ENCODE measurements at regions of chr11 and their contacts with region 1.

Region 1: DNA sequence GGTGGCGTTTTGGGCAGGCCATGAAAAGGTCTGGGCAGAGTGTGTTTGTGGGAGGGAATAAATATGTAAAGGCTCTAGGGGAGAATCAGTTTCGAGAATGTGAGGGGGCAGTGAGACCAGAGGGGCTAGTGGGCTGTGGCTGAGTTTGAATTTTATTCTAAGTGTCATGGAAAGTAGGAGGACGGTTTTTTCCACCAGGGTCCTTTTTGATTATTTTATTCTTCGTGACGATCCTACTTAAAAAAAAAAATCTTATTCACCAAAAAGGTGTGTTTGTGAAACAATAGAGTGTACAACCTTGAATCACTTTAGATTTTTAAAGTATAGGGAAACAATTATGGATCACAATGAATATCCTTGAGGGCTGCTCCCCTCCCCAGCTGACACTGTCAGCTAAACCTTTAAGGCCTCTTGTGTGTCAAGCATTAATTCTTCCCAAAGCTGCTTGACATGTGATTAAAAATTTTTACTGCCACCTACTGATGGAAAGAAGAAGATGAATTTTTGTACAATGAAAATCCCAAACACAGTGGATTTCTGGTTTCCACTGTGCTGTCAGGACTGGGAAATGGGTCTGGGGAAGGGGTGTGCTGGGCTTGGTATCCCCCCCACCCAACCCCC is 107.5 kb upstream of the OR4B1 start:
- DNase-seq: peak; percentile 35
- H3K4me3 ChIP-seq: no peak overlapping the region
- H3K27ac ChIP-seq: no peak overlapping the region
- H3K4me1 ChIP-seq: peaks cover 4% of the 10 kb centered on the region
- H3K27me3 ChIP-seq: peaks cover 1% of the 10 kb centered on the region
- CTCF ChIP-seq: peak; percentile 12 to 39

Region 2: DNA sequence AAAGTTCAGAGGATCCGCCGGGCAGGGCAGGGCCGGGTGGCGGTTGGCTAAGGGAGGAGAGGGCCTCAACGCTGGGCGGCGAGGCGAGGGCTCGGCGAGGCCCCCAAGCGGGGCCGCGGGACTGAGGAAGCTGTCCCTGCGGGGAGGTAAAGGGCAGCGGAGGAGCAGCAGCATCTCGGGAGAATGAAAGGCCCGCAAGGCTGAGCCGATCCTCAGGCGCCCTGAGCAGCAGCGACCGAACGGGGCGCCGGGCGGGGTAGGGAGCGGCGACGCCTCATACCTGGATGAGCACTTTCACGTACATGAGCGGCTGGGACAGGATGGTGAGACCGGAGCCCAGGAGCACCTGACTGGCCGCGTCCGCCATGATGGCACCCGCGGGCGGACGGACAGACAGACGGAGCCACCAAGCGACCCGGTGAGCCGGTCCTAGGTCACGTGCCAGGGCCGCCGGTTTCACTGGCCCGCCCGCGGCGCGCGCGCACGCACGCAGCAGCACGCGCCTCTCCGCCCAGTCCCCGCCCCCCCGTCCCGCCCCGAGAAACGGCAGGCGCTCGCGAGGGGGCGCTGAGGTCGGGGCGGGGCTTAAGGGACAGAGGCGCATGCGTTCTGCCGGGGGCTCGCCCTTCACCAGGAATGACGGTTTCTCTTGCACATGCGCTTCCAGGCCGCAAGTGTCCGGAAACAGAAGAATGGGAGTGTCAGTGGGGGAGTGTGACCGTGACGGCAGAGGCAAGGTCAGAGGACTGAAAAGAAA is 466.9 kb before region 1 on chr11 and contains the start of gene MTCH2:
- CTCF ChIA-PET with region 1: no interaction called
- dilution Hi-C with region 1: no loop called
- in situ Hi-C with region 1: no loop called
- intact Hi-C with region 1: no loop called
- DNase-seq: peak; percentile 96
- H3K4me3 ChIP-seq: peak within 1 kb of the TSS; percentile 81 to 99 (median 93)
- H3K27ac ChIP-seq: peak within 1 kb of the TSS; percentile 89
- H3K4me1 ChIP-seq: peaks cover 11% of the 10 kb centered on the region
- H3K27me3 ChIP-seq: no peaks in the 10 kb centered on the region
- CTCF ChIP-seq: peak in 1 of 2 donors; percentile 35
- total RNA-seq, gene MTCH2: 69.3 to 123 TPM

Region 3: DNA sequence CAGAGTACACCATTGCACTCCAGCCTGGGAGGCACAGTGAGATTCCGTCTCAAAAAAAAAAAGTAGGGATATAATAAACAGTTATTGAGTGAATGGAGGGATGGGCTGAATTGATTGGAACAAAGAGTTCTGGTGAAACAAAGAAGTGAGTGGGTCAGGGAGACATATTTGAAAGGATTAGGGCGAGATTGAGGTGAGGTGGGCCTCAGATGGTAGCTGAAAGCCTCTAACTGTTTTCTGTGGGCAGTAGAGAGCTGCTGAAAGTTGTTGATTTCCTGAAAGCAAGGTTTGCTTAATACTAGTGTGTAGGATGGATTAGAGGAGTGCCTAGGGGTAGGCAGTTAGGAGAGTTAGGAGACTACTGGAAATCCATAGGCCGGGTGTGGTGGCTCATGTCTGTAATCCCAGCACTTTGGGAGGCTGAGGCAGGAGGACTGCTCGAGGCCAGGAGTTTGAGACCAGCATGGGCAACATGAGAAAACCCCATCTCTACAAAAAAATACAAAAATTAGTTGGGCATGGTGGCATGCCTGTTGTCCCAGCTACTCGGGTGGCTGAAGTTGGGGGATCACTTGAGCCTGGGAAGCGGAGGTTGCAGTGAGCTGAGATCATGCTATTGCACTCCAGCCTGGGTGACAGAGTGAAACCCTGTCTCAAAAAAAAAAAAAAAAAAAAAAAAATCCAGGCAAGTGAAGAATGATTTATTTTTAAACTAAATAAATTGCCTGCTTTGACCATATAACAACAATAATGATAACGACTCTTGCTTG is 170.2 kb before region 1 on chr11:
- CTCF ChIA-PET with region 1: no interaction called
- dilution Hi-C with region 1: loop called (anchors 10 kb)
- in situ Hi-C with region 1: loop called (anchors 5 kb)
- intact Hi-C with region 1: loop called (anchors 1 kb)
- DNase-seq: no peak
- H3K4me3 ChIP-seq: no peak overlapping the region
- H3K27ac ChIP-seq: no peak overlapping the region
- H3K4me1 ChIP-seq: no peaks in the 10 kb centered on the region
- H3K27me3 ChIP-seq: no peaks in the 10 kb centered on the region
- CTCF ChIP-seq: no peak

Region 4: GRCh38 chr11:48055292-48056132 is 53.6 kb before region 1 on chr11:
- CTCF ChIA-PET with region 1: no interaction called
- dilution Hi-C with region 1: no loop called
- in situ Hi-C with region 1: no loop called
- intact Hi-C with region 1: no loop called
- DNase-seq: peak; percentile 65
- H3K4me3 ChIP-seq: no peak overlapping the region
- H3K27ac ChIP-seq: no peak overlapping the region
- H3K4me1 ChIP-seq: peaks cover 4% of the 10 kb centered on the region
- H3K27me3 ChIP-seq: no peaks in the 10 kb centered on the region
- CTCF ChIP-seq: no peak

Region 5: DNA sequence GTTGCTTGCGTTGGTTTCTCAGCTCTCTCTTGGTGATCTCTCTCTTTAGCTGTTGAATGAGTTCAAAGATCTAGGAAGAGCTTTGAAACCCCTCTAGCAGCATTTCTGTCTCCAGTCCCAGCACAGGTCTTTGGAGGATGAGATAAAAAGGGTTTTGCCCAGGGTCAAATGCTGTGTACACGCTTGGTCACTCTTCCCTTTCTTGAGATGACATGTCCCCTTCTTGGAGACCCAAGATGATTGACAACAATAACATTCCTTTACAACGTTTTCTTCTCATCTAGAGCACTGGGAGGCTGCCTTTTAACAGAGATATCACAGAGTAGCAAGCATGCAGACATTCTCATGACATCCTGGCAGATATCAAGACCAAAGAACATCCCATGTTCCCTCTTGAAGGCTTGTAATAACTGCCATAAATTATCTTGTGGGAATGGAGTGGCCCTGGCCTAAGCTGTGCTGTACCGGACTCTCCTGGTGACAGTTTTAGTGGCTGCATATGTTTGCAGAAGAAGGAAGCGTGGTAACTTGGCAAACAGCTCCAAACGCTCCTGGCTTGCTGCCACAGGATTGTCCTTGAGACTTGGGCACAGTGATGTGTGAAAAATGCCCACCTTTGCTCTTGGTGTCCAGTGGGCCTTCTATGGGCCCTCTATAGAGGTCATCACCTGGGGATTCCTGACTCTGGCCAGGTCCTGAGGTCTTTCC is 21.0 kb before region 1 on chr11:
- CTCF ChIA-PET with region 1: no interaction called
- dilution Hi-C with region 1: no loop called
- in situ Hi-C with region 1: no loop called
- intact Hi-C with region 1: no loop called
- DNase-seq: no peak
- H3K4me3 ChIP-seq: no peak overlapping the region
- H3K27ac ChIP-seq: no peak overlapping the region
- H3K4me1 ChIP-seq: no peaks in the 10 kb centered on the region
- H3K27me3 ChIP-seq: no peaks in the 10 kb centered on the region
- CTCF ChIP-seq: no peak

Region 6: DNA sequence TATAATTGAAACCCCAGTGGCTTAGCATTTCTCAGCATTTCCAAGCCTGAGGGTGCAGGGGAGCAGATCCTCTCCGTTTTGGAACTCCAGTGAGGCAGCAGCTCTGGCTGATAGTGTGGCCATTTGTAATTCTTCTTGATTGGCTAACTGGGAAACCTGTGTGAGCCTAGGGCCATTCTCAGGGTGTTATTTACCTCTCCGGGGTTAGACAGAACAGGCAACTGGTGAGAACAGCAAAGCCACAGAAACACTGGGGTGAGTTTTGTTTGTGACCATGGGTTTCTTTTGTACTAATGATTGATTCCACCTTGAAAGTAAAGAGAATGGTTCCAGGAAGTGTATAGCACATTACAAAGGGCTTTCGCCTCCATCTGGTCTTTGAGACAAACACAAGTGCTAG is 133.3 kb after region 1 on chr11:
- CTCF ChIA-PET with region 1: no interaction called
- dilution Hi-C with region 1: no loop called
- in situ Hi-C with region 1: no loop called
- intact Hi-C with region 1: no loop called
- DNase-seq: no peak
- H3K4me3 ChIP-seq: no peak overlapping the region
- H3K27ac ChIP-seq: no peak overlapping the region
- H3K4me1 ChIP-seq: no peaks in the 10 kb centered on the region
- H3K27me3 ChIP-seq: no peaks in the 10 kb centered on the region
- CTCF ChIP-seq: no peak